ENCODE measurements at regions of chr7 and their contacts with region 1.

Region 1: DNA sequence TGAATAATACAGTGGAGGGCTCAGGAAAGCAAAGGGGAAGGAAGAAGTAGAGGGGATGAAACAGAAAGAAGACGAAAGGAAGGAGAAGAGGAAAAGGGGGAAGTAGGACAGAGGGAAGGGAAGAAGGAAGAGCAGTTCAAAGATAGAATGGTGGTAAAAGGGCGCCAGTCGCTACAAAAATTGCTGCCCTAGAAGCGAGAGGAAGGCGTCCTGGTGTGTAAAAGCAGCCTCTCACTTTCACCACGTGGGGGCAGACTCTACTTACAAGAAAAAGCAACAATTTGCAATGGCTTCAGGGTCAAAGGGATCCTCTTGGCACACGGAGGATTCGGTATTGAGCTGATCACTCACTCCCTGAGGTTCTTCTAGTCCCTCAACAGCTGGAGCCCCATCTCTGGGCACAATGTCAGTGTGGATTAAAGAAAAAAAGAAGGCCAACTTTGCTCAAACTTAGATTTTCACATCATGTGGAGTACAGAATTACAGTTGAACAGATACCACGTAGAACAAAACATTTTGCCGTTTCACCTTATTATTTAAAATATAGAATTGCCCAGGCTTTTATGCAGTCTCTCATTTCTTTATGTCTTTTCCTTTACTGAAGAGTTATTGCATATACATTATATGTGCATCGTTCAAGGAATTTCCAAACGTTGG is 31.4 kb upstream of the NPVF start:
- DNase-seq: no peak
- ATAC-seq: peak; percentile 95
- H3K4me3 ChIP-seq: no peak overlapping the region
- H3K27ac ChIP-seq: no peak overlapping the region
- H3K4me1 ChIP-seq: no peaks in the 10 kb centered on the region
- H3K27me3 ChIP-seq: no peaks in the 10 kb centered on the region
- CTCF ChIP-seq: peak; percentile 76 to 85 (median 78)
- EP300 ChIP-seq: no peak
- POLR2A ChIP-seq: no peak
- RAD21 ChIP-seq: peak; percentile 87

Region 2: DNA sequence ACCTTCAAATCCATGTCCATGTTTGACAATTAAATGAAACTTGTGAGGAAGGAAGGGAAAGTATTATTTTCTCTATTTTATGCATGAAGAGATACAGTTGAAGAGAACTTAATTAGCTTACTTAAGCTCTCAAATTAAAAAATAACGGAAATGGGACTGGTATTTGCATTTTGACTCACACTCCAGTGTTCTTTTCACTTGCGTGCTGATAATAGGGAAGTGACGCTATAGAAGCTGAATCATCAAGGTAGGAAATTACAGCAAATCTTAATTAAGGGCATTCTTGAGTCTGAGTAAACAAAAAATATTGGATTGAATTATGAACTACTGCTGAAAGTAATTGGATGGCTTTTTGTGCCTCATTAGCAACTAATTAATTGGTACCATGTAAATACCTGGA is 12.6 kb after region 1 on chr7:
- CTCF ChIA-PET with region 1: interaction called, 13 read pairs
- POLR2A ChIA-PET with region 1: no interaction called
- RAD21 ChIA-PET with region 1: no interaction called
- SMC1A ChIA-PET with region 1: interaction called, 11 read pairs
- in situ Hi-C with region 1: no loop called
- intact Hi-C with region 1: no loop called
- DNase-seq: no peak
- ATAC-seq: peak; percentile 56
- H3K4me3 ChIP-seq: no peak overlapping the region
- H3K27ac ChIP-seq: no peak overlapping the region
- H3K4me1 ChIP-seq: no peaks in the 10 kb centered on the region
- H3K27me3 ChIP-seq: peaks cover 0 to 4% of the 10 kb centered on the region in 2 experiments; a peak in 1 of 4 replicates
- CTCF ChIP-seq: no peak
- EP300 ChIP-seq: peak; percentile 86 to 92; a peak in 3 of 4 replicates
- POLR2A ChIP-seq: no peak
- RAD21 ChIP-seq: no peak

Region 3: GRCh38 chr7:25389489-25390106 is 129.9 kb after region 1 on chr7:
- CTCF ChIA-PET with region 1: interaction called, 18 read pairs
- POLR2A ChIA-PET with region 1: no interaction called
- RAD21 ChIA-PET with region 1: no interaction called
- SMC1A ChIA-PET with region 1: interaction called, 4 read pairs
- in situ Hi-C with region 1: loop called (anchors 5 kb)
- intact Hi-C with region 1: loop called (anchors 1 kb)
- DNase-seq: peak; percentile 2
- ATAC-seq: 0 out of 3 replicates have a peak, but pooled peaks have one; percentile 23
- H3K4me3 ChIP-seq: no peak overlapping the region
- H3K27ac ChIP-seq: no peak overlapping the region
- H3K4me1 ChIP-seq: no peaks in the 10 kb centered on the region
- H3K27me3 ChIP-seq: peaks cover 0 to 3% of the 10 kb centered on the region in 2 experiments; a peak in 2 of 4 replicates
- CTCF ChIP-seq: peak; percentile 14 to 47 (median 35); a peak in 4 of 6 replicates
- EP300 ChIP-seq: no peak
- POLR2A ChIP-seq: no peak
- RAD21 ChIP-seq: peak; percentile 55

Region 4: GRCh38 chr7:25559581-25560367 is 300.1 kb after region 1 on chr7:
- CTCF ChIA-PET with region 1: interaction called, 111 read pairs
- POLR2A ChIA-PET with region 1: no interaction called
- RAD21 ChIA-PET with region 1: interaction called, 3 read pairs
- SMC1A ChIA-PET with region 1: interaction called, 26 read pairs
- in situ Hi-C with region 1: loop called (anchors 5 kb)
- intact Hi-C with region 1: no loop called
- DNase-seq: no peak
- ATAC-seq: no peak
- H3K4me3 ChIP-seq: no peak overlapping the region
- H3K27ac ChIP-seq: no peak overlapping the region
- H3K4me1 ChIP-seq: no peaks in the 10 kb centered on the region
- H3K27me3 ChIP-seq: peaks cover 1 to 3% of the 10 kb centered on the region in 2 experiments; a peak in 2 of 4 replicates
- CTCF ChIP-seq: no peak
- EP300 ChIP-seq: no peak
- POLR2A ChIP-seq: no peak
- RAD21 ChIP-seq: no peak

Region 5: GRCh38 chr7:25565949-25566348 is 306.2 kb after region 1 on chr7:
- CTCF ChIA-PET with region 1: interaction called, 111 read pairs
- POLR2A ChIA-PET with region 1: no interaction called
- RAD21 ChIA-PET with region 1: interaction called, 13 read pairs
- SMC1A ChIA-PET with region 1: interaction called, 26 read pairs
- in situ Hi-C with region 1: loop called (anchors 5 kb)
- intact Hi-C with region 1: loop called (anchors 1 kb)
- DNase-seq: no peak
- ATAC-seq: no peak; the same call in 2 of the 3 replicates
- H3K4me3 ChIP-seq: no peak overlapping the region
- H3K27ac ChIP-seq: no peak overlapping the region
- H3K4me1 ChIP-seq: no peaks in the 10 kb centered on the region
- H3K27me3 ChIP-seq: peaks cover 1 to 3% of the 10 kb centered on the region in 2 experiments; a peak in 1 of 4 replicates
- CTCF ChIP-seq: peak; percentile 97 to 100 (median 100); a peak in 5 of 6 replicates
- EP300 ChIP-seq: no peak
- POLR2A ChIP-seq: no peak
- RAD21 ChIP-seq: peak; percentile 90

Region 6: DNA sequence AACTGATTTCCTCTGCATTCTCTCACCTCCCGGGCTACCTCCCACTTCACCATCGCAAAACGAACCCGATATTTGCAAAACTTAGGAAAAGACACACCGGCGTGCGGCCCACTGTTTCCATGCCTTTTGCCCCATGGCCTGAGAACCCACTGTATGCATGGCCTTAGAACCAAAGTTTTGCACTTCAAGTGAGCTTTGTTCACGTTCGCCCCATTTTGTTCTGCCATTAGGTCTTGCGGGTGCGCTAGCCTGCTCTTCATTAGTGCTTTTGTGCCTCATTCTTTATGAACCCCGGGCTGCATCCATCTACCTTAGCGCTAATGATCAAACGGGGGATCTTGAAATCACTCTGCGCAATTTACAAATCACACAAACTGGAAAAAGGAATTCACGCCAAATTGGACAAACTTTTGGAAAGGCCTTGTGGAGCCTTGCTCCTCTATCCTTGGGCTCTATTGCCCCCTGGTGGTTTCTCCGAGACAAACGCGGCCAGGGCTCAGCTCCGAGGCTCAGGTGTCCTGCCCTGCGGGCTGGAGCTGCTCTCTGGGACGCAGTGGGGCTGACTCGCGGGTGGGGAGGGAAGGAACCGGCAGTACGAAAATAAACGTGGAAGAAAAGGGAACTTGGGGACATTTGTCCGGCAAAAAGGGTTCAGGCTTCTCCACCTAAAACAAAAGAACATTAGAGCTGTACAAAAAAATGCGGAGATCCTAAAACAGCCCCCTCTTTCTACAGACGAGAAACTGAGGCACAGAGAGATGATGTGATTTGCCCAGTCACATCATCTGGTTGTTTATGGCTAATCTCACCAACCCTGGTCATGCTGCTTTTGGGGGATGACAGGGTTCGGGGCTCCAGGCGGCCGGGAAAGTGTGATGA is 591.9 kb after region 1 on chr7:
- CTCF ChIA-PET with region 1: interaction called, 6 read pairs
- POLR2A ChIA-PET with region 1: no interaction called
- RAD21 ChIA-PET with region 1: interaction called, 4 read pairs
- SMC1A ChIA-PET with region 1: interaction called, 4 read pairs
- in situ Hi-C with region 1: loop called (anchors 5 kb)
- intact Hi-C with region 1: loop called (anchors 2 kb)
- DNase-seq: no peak
- ATAC-seq: peak; percentile 87
- H3K4me3 ChIP-seq: no peak overlapping the region
- H3K27ac ChIP-seq: no peak overlapping the region
- H3K4me1 ChIP-seq: peaks cover 4% of the 10 kb centered on the region; the same call in 1 of the 2 replicates
- H3K27me3 ChIP-seq: peaks cover 8 to 22% of the 10 kb centered on the region in 2 experiments
- CTCF ChIP-seq: peak; percentile 82 to 87 (median 85)
- EP300 ChIP-seq: no peak
- POLR2A ChIP-seq: no peak
- RAD21 ChIP-seq: peak; percentile 82

Measured in GM12878 (cell line).